ENCODE measurements at regions of chr17 and their contacts with region 1.

Region 1: DNA sequence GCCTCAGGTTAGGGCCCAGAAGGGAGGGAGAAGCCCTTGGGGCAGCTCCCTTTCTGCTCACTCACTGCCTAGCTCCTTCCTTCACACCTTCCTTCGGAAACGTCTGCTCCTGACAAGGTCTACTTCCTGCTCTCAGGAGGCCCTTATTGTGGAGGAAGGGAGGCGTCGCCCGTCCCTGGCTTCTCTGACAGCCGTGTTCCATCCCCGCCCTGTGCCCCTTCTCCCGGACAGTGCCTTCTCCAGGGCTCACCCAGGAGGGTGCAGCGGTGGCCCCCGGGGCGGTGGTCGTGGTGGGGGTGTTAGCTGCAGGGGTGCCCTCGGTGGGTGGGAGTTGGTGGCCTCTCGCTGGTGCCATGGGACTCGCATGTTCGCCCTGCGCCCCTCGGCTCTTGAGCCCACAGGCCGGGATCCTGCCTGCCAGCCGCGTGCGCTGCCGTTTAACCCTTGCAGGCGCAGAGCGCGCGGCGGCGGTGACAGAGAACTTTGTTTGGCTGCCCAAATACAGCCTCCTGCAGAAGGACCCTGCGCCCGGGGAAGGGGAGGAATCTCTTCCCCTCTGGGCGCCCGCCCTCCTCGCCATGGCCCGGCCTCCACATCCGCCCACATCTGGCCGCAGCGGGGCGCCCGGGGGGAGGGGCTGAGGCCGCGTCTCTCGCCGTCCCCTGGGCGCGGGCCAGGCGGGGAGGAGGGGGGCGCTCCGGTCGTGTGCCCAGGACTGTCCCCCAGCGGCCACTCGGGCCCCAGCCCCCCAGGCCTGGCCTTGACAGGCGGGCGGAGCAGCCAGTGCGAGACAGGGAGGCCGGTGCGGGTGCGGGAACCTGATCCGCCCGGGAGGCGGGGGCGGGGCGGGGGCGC is 231.9 kb downstream of the SEC14L1 start:
- DNase-seq: peak; percentile 53
- H3K4me3 ChIP-seq: peak overlapping the region; percentile 38 to 91 (median 59)
- H3K27ac ChIP-seq: no peak overlapping the region
- H3K4me1 ChIP-seq: peaks cover 15% of the 10 kb centered on the region
- H3K27me3 ChIP-seq: no peaks in the 10 kb centered on the region
- CTCF ChIP-seq: no peak
- POLR2A ChIP-seq: no peak

Region 2: DNA sequence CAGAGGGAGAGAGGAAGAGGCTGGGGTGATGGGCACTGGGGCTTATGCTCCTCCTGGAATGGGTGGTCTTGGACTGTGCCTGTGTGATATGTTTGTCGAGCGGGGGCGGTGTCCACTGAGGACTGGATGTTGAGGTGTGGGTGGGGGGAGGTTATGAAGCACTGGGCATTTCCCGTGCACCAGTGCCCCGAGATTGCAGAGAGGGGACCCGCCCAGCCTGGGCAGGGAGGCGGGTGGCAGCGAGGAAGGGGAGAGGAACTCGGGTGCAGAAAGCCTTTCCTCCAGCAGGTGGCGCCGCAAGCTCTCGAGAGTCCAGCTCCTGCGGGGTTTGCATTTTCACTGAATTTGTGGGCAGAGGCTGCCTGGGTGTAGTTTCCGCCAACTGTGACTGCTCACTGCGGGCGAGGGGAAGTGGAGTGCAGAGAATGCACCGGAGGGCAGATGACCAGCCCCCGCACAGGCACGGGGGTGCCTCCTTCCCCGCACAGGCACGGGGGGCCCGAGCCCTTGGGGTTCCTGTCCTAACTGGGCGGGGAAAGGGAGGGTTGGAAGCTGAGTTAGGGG is 41.3 kb before region 1 on chr17:
- CTCF ChIA-PET with region 1: interaction called, 29 read pairs
- POLR2A ChIA-PET with region 1: no interaction called
- dilution Hi-C with region 1: no loop called
- intact Hi-C with region 1: loop called (anchors 1 kb)
- DNase-seq: peak; percentile 78
- H3K4me3 ChIP-seq: peak overlapping the region in 1 of 3 experiments; percentile 14
- H3K27ac ChIP-seq: no peak overlapping the region
- H3K4me1 ChIP-seq: peaks cover 5% of the 10 kb centered on the region
- H3K27me3 ChIP-seq: no peaks in the 10 kb centered on the region
- CTCF ChIP-seq: peak; percentile 85 to 95
- POLR2A ChIP-seq: no peak

Region 3: GRCh38 chr17:77345260-77345910 is 27.3 kb before region 1 on chr17:
- CTCF ChIA-PET with region 1: interaction called, 5 read pairs
- POLR2A ChIA-PET with region 1: interaction called, 3 read pairs
- dilution Hi-C with region 1: no loop called
- intact Hi-C with region 1: loop called (anchors 1 kb)
- DNase-seq: no peak
- H3K4me3 ChIP-seq: no peak overlapping the region
- H3K27ac ChIP-seq: no peak overlapping the region
- H3K4me1 ChIP-seq: peaks cover 15% of the 10 kb centered on the region
- H3K27me3 ChIP-seq: peaks cover 2 to 9% of the 10 kb centered on the region in 2 experiments
- CTCF ChIP-seq: no peak
- POLR2A ChIP-seq: no peak

Region 4: GRCh38 chr17:77391668-77392375 is 19.2 kb after region 1 on chr17:
- CTCF ChIA-PET with region 1: interaction called, 18 read pairs
- POLR2A ChIA-PET with region 1: interaction called, 9 read pairs
- dilution Hi-C with region 1: no loop called
- intact Hi-C with region 1: loop called (anchors 1 kb)
- DNase-seq: peak; percentile 57
- H3K4me3 ChIP-seq: no peak overlapping the region
- H3K27ac ChIP-seq: no peak overlapping the region
- H3K4me1 ChIP-seq: peaks cover 47% of the 10 kb centered on the region
- H3K27me3 ChIP-seq: no peaks in the 10 kb centered on the region
- CTCF ChIP-seq: no peak
- POLR2A ChIP-seq: peak; percentile 42

Region 5: GRCh38 chr17:77420804-77421629 is 48.3 kb after region 1 on chr17:
- CTCF ChIA-PET with region 1: interaction called, 8 read pairs
- POLR2A ChIA-PET with region 1: no interaction called
- dilution Hi-C with region 1: no loop called
- intact Hi-C with region 1: loop called (anchors 1 kb)
- DNase-seq: peak; percentile 42
- H3K4me3 ChIP-seq: no peak overlapping the region
- H3K27ac ChIP-seq: no peak overlapping the region
- H3K4me1 ChIP-seq: peaks cover 35% of the 10 kb centered on the region
- H3K27me3 ChIP-seq: no peaks in the 10 kb centered on the region
- CTCF ChIP-seq: no peak
- POLR2A ChIP-seq: no peak

Region 6: DNA sequence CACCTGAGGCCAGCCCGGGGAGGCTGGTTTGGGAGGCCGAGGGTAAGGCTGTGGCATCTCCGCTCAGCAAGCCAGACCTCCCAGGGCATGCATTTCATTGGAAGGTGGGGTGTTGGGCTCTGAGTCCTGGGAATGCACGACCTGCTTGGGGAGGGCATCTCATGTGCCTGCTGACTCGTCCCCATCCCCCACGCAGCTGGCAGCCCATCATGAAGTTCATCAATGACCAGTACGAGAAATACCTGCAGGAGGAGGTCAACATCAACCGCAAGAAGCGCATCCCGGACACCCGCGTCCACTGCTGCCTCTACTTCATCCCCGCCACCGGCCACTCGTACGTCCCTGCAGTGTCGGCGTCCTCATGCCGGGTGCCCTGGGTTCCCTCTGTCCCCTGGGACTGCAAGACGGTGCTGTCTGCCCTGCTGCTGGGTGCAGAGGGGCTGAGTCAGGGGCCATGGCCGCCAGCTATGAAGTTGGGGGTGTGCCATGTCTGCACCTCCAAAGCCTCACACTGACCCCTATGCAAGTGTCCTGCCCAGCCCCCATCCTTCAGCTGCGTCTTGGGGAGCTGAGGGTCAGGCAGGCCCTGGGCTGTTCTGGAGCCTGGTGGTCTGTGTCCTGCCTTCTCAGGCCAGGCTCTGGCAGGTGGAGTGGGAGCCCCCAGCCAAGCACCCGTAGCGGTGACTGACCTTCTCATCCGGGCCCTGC is 116.0 kb after region 1 on chr17:
- CTCF ChIA-PET with region 1: no interaction called
- POLR2A ChIA-PET with region 1: no interaction called
- dilution Hi-C with region 1: no loop called
- intact Hi-C with region 1: no loop called
- DNase-seq: no peak
- H3K4me3 ChIP-seq: no peak overlapping the region
- H3K27ac ChIP-seq: no peak overlapping the region
- H3K4me1 ChIP-seq: no peaks in the 10 kb centered on the region
- H3K27me3 ChIP-seq: no peaks in the 10 kb centered on the region
- CTCF ChIP-seq: no peak
- POLR2A ChIP-seq: no peak

Measured in endothelial cell of umbilical vein (primary cell).